ENCODE measurements at regions of chr1 and their contacts with region 1.

Region 1: DNA sequence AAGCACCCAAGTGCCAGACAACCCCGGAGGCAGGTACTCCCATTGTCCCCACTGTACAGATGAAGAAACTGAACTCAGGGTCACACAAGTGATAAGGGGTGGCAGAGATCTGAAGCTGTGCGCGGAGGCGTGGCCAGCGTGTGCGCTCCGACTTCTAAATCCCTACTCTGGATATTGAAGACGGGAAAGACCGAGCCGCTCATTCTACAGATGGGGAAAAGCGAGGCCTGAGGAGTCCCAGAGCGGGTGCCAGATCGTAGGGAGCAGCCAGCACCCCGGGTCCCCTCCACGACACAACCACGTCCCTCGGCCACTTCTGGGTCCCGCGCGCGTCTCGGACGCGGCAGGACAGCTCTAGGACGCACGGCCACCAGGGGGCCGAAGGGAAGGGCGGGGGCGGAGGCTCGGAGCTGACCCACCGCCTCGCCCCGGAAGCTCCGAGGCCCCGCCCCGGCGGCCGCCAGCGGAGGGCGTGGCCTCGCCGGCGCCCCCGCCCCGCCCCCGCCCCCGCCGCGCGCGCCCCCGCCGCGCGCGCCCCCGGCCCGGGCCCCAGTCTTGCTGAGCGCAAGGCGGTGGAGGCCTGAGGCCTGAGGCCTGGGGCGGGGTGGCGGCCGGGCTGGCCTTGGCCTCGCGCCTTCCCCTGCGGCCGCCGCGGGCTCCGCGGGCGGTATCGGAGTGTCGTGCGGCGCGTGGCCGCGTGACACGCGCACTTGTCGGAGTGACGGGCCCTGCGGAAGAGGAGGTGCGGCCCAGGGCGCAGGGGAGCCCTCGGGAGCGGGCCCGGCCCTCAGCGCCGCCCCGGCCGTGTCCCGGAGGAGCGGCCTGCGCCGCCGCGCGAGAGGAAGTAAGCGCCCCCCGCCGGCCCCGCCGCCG is at the start of gene H6PD:
- DNase-seq: peak; percentile 43 to 89 (median 71)
- ATAC-seq: peak; percentile 76
- H3K4me3 ChIP-seq: peak within 1 kb of the TSS; percentile 71 to 84
- H3K4me3 Mint-ChIP-seq: peak within 1 kb of the TSS; percentile 96
- H3K27ac ChIP-seq: peak within 1 kb of the TSS; percentile 64 to 84
- H3K27ac Mint-ChIP-seq: peak within 1 kb of the TSS; percentile 96
- H3K4me1 ChIP-seq: peaks cover 26% of the 10 kb centered on the region
- H3K4me1 Mint-ChIP-seq: peaks cover 38% of the 10 kb centered on the region
- H3K27me3 ChIP-seq: no peaks in the 10 kb centered on the region
- H3K27me3 Mint-ChIP-seq: no peaks in the 10 kb centered on the region
- CTCF ChIP-seq: peak; percentile 22
- total RNA-seq, gene H6PD: 11.1 to 11.2 TPM

Region 2: DNA sequence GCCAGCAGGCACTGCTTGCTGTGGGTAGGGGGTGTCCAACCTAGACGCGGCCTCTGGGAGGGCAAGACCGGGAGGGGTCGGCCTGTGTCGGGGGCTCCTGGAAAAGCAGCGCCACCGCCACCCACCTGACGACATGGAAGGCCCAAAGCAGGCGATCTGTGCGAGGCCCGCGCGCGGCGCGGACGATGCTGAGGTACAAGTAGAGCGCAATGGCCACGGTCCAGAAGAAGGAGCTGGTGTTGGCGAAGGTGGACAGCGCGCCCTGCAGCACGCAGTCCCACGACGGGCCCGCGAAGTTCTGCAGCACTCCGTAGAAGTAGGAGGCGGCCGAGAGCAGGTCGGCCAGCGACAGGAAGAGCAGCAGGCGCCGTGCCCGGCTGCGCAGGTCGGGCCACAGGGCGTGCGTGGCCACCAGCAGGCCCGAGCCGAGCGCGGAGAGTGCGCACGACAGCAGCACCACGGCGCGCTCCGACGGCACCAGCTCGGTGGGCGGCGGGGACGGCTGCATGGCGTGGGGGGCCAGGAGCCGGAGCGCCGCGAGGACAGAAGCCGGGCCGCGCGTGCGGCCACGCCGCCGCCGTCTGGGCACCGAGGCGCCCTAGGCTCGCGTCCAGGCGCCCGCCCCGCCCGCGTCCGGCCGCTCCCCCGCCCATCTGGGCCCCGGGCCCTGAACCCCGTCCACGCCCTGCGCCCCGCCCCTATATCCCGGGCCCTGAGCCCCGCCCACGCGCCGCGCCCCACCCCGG is 105.8 kb before region 1 on chr1 and contains the start of gene GPR157:
- CTCF ChIA-PET with region 1: no interaction called
- POLR2A ChIA-PET with region 1: no interaction called
- intact Hi-C with region 1: loop called (anchors 1 to 2 kb)
- DNase-seq: peak; percentile 56 to 88 (median 81)
- ATAC-seq: peak; percentile 84
- H3K4me3 ChIP-seq: peak within 1 kb of the TSS; percentile 61 to 68
- H3K4me3 Mint-ChIP-seq: peak within 1 kb of the TSS; percentile 90
- H3K27ac ChIP-seq: peak within 1 kb of the TSS; percentile 37 to 50
- H3K27ac Mint-ChIP-seq: peak within 1 kb of the TSS; percentile 75
- H3K4me1 ChIP-seq: peaks cover 33% of the 10 kb centered on the region
- H3K4me1 Mint-ChIP-seq: peaks cover 35% of the 10 kb centered on the region
- H3K27me3 ChIP-seq: no peaks in the 10 kb centered on the region
- H3K27me3 Mint-ChIP-seq: no peaks in the 10 kb centered on the region
- CTCF ChIP-seq: no peak
- total RNA-seq, gene GPR157: 1.9 to 2.9 TPM

Region 3: GRCh38 chr1:9166289-9167235 is 67.9 kb before region 1 on chr1:
- CTCF ChIA-PET with region 1: no interaction called
- POLR2A ChIA-PET with region 1: no interaction called
- intact Hi-C with region 1: no loop called
- DNase-seq: no peak
- ATAC-seq: no peak
- H3K4me3 ChIP-seq: no peak overlapping the region
- H3K4me3 Mint-ChIP-seq: no peak overlapping the region
- H3K27ac ChIP-seq: no peak overlapping the region
- H3K27ac Mint-ChIP-seq: no peak overlapping the region
- H3K4me1 ChIP-seq: no peaks in the 10 kb centered on the region
- H3K4me1 Mint-ChIP-seq: no peaks in the 10 kb centered on the region
- H3K27me3 ChIP-seq: no peaks in the 10 kb centered on the region
- H3K27me3 Mint-ChIP-seq: peaks cover 5% of the 10 kb centered on the region
- CTCF ChIP-seq: no peak

Region 4: GRCh38 chr1:9539165-9539828 is 304.8 kb after region 1 on chr1 and contains the start of gene SLC25A33:
- CTCF ChIA-PET with region 1: no interaction called
- POLR2A ChIA-PET with region 1: no interaction called
- intact Hi-C with region 1: loop called in 1 of 2 experiments (anchors 1 kb)
- DNase-seq: peak; percentile 91 to 99 (median 96)
- ATAC-seq: peak; percentile 99
- H3K4me3 ChIP-seq: peak within 1 kb of the TSS; percentile 62 to 68
- H3K4me3 Mint-ChIP-seq: peak within 1 kb of the TSS; percentile 90
- H3K27ac ChIP-seq: peak within 1 kb of the TSS; percentile 59 to 83
- H3K27ac Mint-ChIP-seq: peak within 1 kb of the TSS; percentile 91
- H3K4me1 ChIP-seq: peaks cover 19% of the 10 kb centered on the region
- H3K4me1 Mint-ChIP-seq: peaks cover 33% of the 10 kb centered on the region
- H3K27me3 ChIP-seq: no peaks in the 10 kb centered on the region
- H3K27me3 Mint-ChIP-seq: no peaks in the 10 kb centered on the region
- CTCF ChIP-seq: no peak
- total RNA-seq, gene SLC25A33: 10.1 to 11.2 TPM

Region 5: GRCh38 chr1:9823943-9824701 is 589.7 kb after region 1 on chr1 and contains the start of gene CLSTN1:
- CTCF ChIA-PET with region 1: no interaction called
- POLR2A ChIA-PET with region 1: no interaction called
- intact Hi-C with region 1: loop called (anchors 5 to 10 kb)
- DNase-seq: peak; percentile 76 to 93 (median 91)
- ATAC-seq: peak; percentile 72
- H3K4me3 ChIP-seq: peak within 1 kb of the TSS; percentile 58 to 72
- H3K4me3 Mint-ChIP-seq: peak within 1 kb of the TSS; percentile 96
- H3K27ac ChIP-seq: peak within 1 kb of the TSS; percentile 37 to 76
- H3K27ac Mint-ChIP-seq: peak within 1 kb of the TSS; percentile 89
- H3K4me1 ChIP-seq: peaks cover 36% of the 10 kb centered on the region
- H3K4me1 Mint-ChIP-seq: peaks cover 43% of the 10 kb centered on the region
- H3K27me3 ChIP-seq: no peaks in the 10 kb centered on the region
- H3K27me3 Mint-ChIP-seq: no peaks in the 10 kb centered on the region
- CTCF ChIP-seq: no peak
- total RNA-seq, gene CLSTN1: 50.0 to 51.1 TPM

Region 6: DNA sequence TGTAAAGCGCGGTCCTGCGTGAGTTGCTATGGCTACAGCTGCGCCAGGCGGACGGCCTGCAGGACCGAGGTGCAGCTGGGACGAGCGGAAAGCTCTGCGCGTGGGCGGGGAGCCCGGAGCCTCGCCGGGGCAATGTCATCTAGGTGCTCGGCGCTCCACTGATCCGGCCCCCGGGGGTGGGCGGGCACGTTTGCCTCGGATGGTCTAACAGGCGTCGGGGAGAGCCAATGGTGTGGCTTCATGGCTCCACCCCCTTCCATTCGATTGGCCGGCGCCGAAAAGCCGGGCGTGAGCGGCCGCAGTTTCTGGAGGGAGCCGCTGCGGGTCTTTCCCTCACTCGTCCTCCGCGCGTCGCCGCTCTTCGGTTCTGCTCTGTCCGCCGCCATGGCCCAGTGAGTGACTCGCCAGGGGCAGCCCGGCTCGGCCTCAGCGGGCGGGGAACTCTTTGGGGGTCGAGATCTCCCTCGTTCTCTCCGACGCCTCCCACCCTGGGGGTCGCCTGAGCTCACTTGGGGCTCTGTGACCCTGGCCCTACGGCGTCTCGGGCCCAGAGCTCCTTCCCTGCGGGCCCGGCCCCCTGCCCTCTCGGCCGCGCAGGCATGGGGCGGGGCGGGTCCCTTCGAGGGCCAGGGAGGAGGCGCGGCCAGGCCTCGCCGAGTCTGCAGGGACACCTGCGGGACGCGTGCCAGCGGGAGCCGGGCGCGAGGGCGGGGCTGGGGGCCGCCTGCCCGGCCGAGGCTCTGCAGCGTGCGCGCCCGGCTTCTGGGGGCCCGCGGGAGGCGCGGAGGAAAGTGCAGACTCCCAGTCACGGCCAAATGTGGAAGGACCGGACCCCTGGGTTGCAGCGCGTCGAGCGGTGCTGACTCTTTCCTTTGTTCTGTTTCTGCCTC is 1164.5 kb after region 1 on chr1 and contains the start of gene PGD:
- CTCF ChIA-PET with region 1: no interaction called
- POLR2A ChIA-PET with region 1: no interaction called
- intact Hi-C with region 1: loop called in 1 of 2 experiments (anchors 10 kb)
- DNase-seq: peak; percentile 91 to 98 (median 97)
- ATAC-seq: peak; percentile 97
- H3K4me3 ChIP-seq: peak within 1 kb of the TSS; percentile 86 to 97
- H3K4me3 Mint-ChIP-seq: peak within 1 kb of the TSS; percentile 97
- H3K27ac ChIP-seq: peak within 1 kb of the TSS; percentile 57 to 67
- H3K27ac Mint-ChIP-seq: peak within 1 kb of the TSS; percentile 77
- H3K4me1 ChIP-seq: peaks cover 16% of the 10 kb centered on the region
- H3K4me1 Mint-ChIP-seq: peaks cover 22% of the 10 kb centered on the region
- H3K27me3 ChIP-seq: no peaks in the 10 kb centered on the region
- H3K27me3 Mint-ChIP-seq: no peaks in the 10 kb centered on the region
- CTCF ChIP-seq: no peak
- total RNA-seq, gene PGD: 20.2 to 21.7 TPM